Heart left ventricle (tissue), 16 donors: ENCODE measurements at regions of chr10 and their contacts with region 1.

Region 1: DNA sequence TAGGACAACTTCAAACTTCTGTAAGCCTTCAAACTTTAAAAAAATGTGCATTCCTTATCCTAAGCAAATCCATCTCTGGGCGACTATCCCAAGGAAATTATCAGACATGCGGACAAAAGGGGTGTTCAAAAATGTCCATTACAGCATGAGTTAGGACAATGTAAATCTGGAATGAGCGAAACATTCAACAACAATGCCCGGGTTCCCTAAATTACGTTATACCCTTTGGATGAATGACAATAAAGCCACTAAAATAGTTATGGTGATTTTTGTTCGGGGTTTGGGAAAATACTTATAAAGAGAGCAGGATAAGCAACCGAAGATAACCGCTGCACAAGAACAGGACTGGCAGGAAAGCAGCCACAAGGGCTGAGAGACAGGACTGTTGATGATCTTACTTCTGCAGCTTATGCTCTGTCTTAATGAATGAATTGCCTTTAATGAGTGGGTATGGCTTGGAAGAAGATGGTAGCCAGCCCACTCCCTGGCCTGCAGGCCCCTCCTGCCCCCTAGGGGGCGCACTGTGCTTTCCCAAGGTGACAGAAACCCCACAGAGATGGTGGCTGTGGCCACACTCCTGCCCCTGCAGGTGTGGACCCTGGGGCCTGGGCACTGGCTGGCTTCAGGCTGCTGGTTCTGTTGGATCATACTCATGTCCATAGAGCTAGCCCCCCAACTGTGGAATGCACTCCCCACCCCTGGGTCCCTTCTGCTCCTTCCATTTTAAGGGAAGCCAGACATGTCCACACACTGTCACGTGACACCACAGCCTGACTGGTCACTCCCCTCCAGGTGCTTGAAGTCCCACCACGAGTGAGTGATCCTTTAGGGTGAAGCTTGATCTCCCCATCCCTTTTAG is 45.0 kb downstream of the ZCCHC24 start:
- DNase-seq: peak in 2 of 5 donors; percentile 52 to 77
- ATAC-seq: no peak
- H3K4me3 ChIP-seq: no peak overlapping the region
- H3K27ac ChIP-seq: peak overlapping the region in 10 of 12 donors; percentile 83 to 98 (median 91)
- H3K4me1 ChIP-seq: peaks cover 0 to 95% (median 76%) of the 10 kb centered on the region in 12 donors
- H3K27me3 ChIP-seq: no peaks in the 10 kb centered on the region
- CTCF ChIP-seq: peak; percentile 46 to 74 (median 62)
- POLR2A ChIP-seq: no peak

Region 2: DNA sequence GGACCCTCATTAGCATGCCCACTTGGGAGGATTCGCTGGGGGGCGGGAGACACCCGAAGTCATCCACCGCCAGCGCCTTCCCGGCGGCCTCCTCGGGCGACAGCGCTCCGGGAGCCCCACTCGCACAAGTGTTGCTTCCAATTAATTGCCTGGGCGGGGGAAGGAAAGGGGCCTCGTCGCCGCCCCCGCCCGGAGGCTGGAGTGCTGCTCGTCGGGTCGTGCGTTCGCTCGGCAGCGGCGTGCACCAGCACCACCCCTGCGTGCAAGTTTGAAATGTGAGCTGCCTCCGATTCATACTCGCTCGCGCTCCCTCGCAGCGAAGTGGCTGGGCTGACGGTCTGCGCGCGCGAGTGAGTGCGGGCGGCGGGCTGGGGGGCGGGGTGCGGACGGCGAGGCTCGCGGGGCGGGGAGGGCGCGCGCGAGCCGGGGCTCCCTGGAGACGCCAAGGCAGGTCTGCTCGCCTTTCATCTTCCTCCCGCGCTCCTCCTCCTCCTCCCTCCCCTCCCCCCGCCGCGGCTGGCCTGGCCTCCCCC is 157.7 kb before region 1 on chr10:
- intact Hi-C with region 1: no loop called
- DNase-seq: peak; percentile 70 to 82 (median 75)
- ATAC-seq: peak in 3 of 4 donors; percentile 12 to 32 (median 14)
- H3K4me3 ChIP-seq: peak overlapping the region; percentile 26 to 74 (median 58)
- H3K27ac ChIP-seq: peak overlapping the region; percentile 3 to 93 (median 86)
- H3K4me1 ChIP-seq: peaks cover 44 to 97% (median 83%) of the 10 kb centered on the region in 12 donors
- H3K27me3 ChIP-seq: no peaks in the 10 kb centered on the region
- CTCF ChIP-seq: no peak
- POLR2A ChIP-seq: no peak

Region 3: GRCh38 chr10:79347226-79347893 is 53.0 kb before region 1 on chr10 and contains the start of gene PPIF:
- intact Hi-C with region 1: no loop called
- DNase-seq: peak; percentile 94 to 98 (median 96)
- ATAC-seq: peak; percentile 77 to 92 (median 90)
- H3K4me3 ChIP-seq: peak within 1 kb of the TSS; percentile 68 to 98 (median 81)
- H3K27ac ChIP-seq: peak within 1 kb of the TSS; percentile 84 to 97 (median 92)
- H3K4me1 ChIP-seq: peaks cover 0 to 54% (median 23%) of the 10 kb centered on the region in 12 donors
- H3K27me3 ChIP-seq: no peaks in the 10 kb centered on the region
- CTCF ChIP-seq: peak; percentile 88 to 99 (median 98)
- POLR2A ChIP-seq: peak; percentile 29 to 85
- total RNA-seq, gene PPIF: 86.3 to 180 (median 128) TPM

Region 4: DNA sequence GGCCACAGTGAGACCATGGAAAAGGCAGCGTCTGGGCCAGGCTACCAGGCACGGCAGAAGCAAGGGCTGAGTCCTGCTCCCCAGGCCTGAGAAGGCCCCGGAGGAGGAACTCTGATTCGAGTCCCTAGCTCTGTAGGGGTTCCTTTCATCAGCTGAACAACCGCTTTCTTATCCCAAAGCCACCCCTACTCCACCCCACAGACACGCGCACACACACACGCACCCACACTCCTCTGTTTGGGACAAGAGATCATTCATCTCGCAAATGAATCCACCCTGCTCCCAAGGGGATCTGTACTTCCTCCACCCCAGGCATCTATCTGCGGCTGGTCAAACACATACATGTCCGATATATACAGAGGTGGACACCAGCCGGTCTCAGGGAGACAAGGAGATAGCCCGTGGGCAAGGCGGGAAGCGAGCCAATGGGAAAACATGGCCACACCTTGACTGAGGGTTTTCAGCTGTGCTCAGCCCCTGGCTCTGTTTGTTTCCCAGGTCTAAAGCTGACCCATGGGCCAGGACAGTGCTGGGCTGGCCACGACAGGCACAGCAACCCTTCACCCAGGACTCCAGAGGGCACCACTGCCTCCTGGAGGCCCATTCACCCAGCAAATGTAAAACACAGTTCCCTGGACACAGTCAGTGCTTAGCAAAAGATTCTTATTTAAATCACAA is 37.8 kb after region 1 on chr10:
- intact Hi-C with region 1: loop called in 6 of 10 experiments (anchors 5 kb)
- DNase-seq: no peak
- ATAC-seq: no peak
- H3K4me3 ChIP-seq: no peak overlapping the region
- H3K27ac ChIP-seq: peak overlapping the region in 10 of 12 donors; percentile 9 to 94 (median 32)
- H3K4me1 ChIP-seq: peaks cover 31 to 99% (median 92%) of the 10 kb centered on the region in 12 donors
- H3K27me3 ChIP-seq: no peaks in the 10 kb centered on the region
- CTCF ChIP-seq: peak in 5 of 12 donors; percentile 16 to 44 (median 25)
- POLR2A ChIP-seq: no peak